Aorta (tissue), 5 donors: ENCODE measurements at regions of chr3 and their contacts with region 1.

Region 1: GRCh38 chr3:108914774-108915641 is 38.7 kb downstream of the GUCA1C start:
- DNase-seq: no peak
- ATAC-seq: peak; percentile 71
- H3K4me3 ChIP-seq: no peak overlapping the region
- H3K27ac ChIP-seq: no peak overlapping the region
- H3K4me1 ChIP-seq: peaks cover 0 to 2% of the 10 kb centered on the region in 2 donors
- H3K27me3 ChIP-seq: no peaks in the 10 kb centered on the region

Region 2: GRCh38 chr3:108662130-108662738 is 252.8 kb before region 1 on chr3:
- intact Hi-C with region 1: loop called (anchors 5 to 10 kb)
- DNase-seq: no peak
- ATAC-seq: peak; percentile 86
- H3K4me3 ChIP-seq: no peak overlapping the region
- H3K27ac ChIP-seq: no peak overlapping the region
- H3K4me1 ChIP-seq: no peaks in the 10 kb centered on the region
- H3K27me3 ChIP-seq: no peaks in the 10 kb centered on the region

Region 3: DNA sequence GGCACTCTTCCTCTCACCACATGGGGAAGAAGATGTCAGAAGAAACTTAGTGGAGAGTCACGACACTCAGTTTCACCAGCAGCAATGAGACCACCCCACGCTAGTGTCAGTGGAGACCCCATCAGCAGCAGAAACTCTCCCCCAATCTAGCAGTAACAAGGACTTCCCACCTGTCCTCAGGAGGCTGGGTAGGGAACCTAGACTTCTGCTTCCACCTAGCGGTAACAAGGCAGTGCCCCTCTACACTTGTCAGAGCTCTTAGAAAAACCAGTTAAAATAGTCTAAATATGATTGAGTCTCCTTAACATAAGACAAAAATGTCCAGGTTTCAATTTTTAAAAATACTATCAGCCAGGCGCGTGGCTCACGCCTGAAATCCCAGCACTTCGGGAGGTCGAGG is 35.1 kb before region 1 on chr3:
- intact Hi-C with region 1: no loop called
- DNase-seq: no peak
- ATAC-seq: no peak
- H3K4me3 ChIP-seq: no peak overlapping the region
- H3K27ac ChIP-seq: no peak overlapping the region
- H3K4me1 ChIP-seq: no peaks in the 10 kb centered on the region
- H3K27me3 ChIP-seq: no peaks in the 10 kb centered on the region

Region 4: GRCh38 chr3:108959017-108959416 is 44.0 kb after region 1 on chr3:
- intact Hi-C with region 1: no loop called
- DNase-seq: no peak
- ATAC-seq: no peak
- H3K4me3 ChIP-seq: no peak overlapping the region
- H3K27ac ChIP-seq: no peak overlapping the region
- H3K4me1 ChIP-seq: no peaks in the 10 kb centered on the region
- H3K27me3 ChIP-seq: no peaks in the 10 kb centered on the region